ENCODE measurements at regions of chr17 and their contacts with region 1.

Region 1: GRCh38 chr17:6381057-6381456 is 53.9 kb downstream of the AIPL1 start:
- DNase-seq: no peak
- H3K4me3 Mint-ChIP-seq: no peak overlapping the region
- H3K27ac Mint-ChIP-seq: no peak overlapping the region
- H3K4me1 Mint-ChIP-seq: peaks cover 6% of the 10 kb centered on the region
- H3K27me3 Mint-ChIP-seq: peaks cover 11% of the 10 kb centered on the region
- CTCF ChIP-seq: no peak

Region 2: DNA sequence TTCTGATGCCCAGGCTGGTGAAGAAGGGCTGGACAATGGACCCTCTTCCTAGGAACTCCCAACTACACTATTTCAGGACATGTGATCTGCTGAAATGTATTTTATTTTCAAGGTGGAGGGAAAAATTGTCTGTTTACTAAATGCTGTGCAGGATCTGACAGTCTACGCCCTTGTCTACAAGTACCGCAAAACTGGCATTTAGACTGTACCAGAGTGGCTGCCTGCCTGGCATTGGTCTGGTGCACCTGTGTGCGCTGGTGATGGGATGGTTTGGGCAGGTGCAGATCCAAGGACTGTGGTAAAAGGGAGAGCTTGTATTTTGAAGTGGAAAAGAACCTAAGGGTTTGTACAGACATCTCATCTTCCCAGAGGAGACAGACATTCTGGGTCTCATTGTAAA is 25.9 kb before region 1 on chr17:
- CTCF ChIA-PET with region 1: no interaction called
- POLR2A ChIA-PET with region 1: no interaction called
- intact Hi-C with region 1: no loop called
- DNase-seq: no peak
- H3K4me3 Mint-ChIP-seq: no peak overlapping the region
- H3K27ac Mint-ChIP-seq: no peak overlapping the region
- H3K4me1 Mint-ChIP-seq: no peaks in the 10 kb centered on the region
- H3K27me3 Mint-ChIP-seq: peaks cover 51% of the 10 kb centered on the region
- CTCF ChIP-seq: no peak

Region 3: GRCh38 chr17:6366221-6366666 is 14.8 kb before region 1 on chr17:
- CTCF ChIA-PET with region 1: no interaction called
- POLR2A ChIA-PET with region 1: interaction called, 12 read pairs
- intact Hi-C with region 1: no loop called
- DNase-seq: peak; percentile 71
- H3K4me3 Mint-ChIP-seq: no peak overlapping the region
- H3K27ac Mint-ChIP-seq: peak overlapping the region; percentile 76
- H3K4me1 Mint-ChIP-seq: peaks cover 21% of the 10 kb centered on the region
- H3K27me3 Mint-ChIP-seq: no peaks in the 10 kb centered on the region
- CTCF ChIP-seq: no peak